ENCODE measurements at regions of chr7 and their contacts with region 1.

Region 1: GRCh38 chr7:77696198-77697028 is at the start of gene RSBN1L:
- DNase-seq: peak; percentile 99
- H3K4me3 ChIP-seq: peak within 1 kb of the TSS; percentile 99
- H3K4me3 Mint-ChIP-seq: peak within 1 kb of the TSS; percentile 100
- H3K27ac Mint-ChIP-seq: peak within 1 kb of the TSS; percentile 97
- H3K4me1 ChIP-seq: peaks cover 23% of the 10 kb centered on the region
- H3K4me1 Mint-ChIP-seq: peaks cover 30% of the 10 kb centered on the region
- H3K27me3 ChIP-seq: no peaks in the 10 kb centered on the region
- H3K27me3 Mint-ChIP-seq: no peaks in the 10 kb centered on the region
- CTCF ChIP-seq: peak in 1 of 2 experiments; percentile 10
- total RNA-seq, gene RSBN1L: 21.4 and 25.3 TPM in 2 replicates

Region 2: GRCh38 chr7:77657427-77658224 is 38.8 kb before region 1 on chr7:
- CTCF ChIA-PET with region 1: interaction called, 4 read pairs
- POLR2A ChIA-PET with region 1: interaction called, 3 read pairs
- intact Hi-C with region 1: loop called (anchors 2 kb)
- DNase-seq: peak in 1 of 2 experiments; percentile 59
- H3K4me3 ChIP-seq: no peak overlapping the region
- H3K4me3 Mint-ChIP-seq: no peak overlapping the region
- H3K27ac Mint-ChIP-seq: no peak overlapping the region
- H3K4me1 ChIP-seq: peaks cover 10% of the 10 kb centered on the region; the same call in 1 of the 2 replicates
- H3K4me1 Mint-ChIP-seq: peaks cover 18% of the 10 kb centered on the region
- H3K27me3 ChIP-seq: no peaks in the 10 kb centered on the region
- H3K27me3 Mint-ChIP-seq: no peaks in the 10 kb centered on the region
- CTCF ChIP-seq: peak; percentile 64 to 72

Region 3: GRCh38 chr7:77679615-77680014 is 16.8 kb before region 1 on chr7:
- CTCF ChIA-PET with region 1: no interaction called
- POLR2A ChIA-PET with region 1: interaction called, 7 read pairs
- intact Hi-C with region 1: loop called (anchors 2 kb)
- DNase-seq: peak in 1 of 2 experiments; percentile 48
- H3K4me3 ChIP-seq: no peak overlapping the region
- H3K4me3 Mint-ChIP-seq: peak overlapping the region; percentile 54
- H3K27ac Mint-ChIP-seq: peak overlapping the region; percentile 42
- H3K4me1 ChIP-seq: peaks cover 37% of the 10 kb centered on the region
- H3K4me1 Mint-ChIP-seq: peaks cover 21% of the 10 kb centered on the region
- H3K27me3 ChIP-seq: no peaks in the 10 kb centered on the region
- H3K27me3 Mint-ChIP-seq: no peaks in the 10 kb centered on the region
- CTCF ChIP-seq: no peak

Region 4: GRCh38 chr7:77729574-77730348 is 33.3 kb after region 1 on chr7:
- CTCF ChIA-PET with region 1: interaction called, 11 read pairs
- POLR2A ChIA-PET with region 1: no interaction called
- intact Hi-C with region 1: loop called (anchors 2 kb)
- DNase-seq: no peak
- H3K4me3 ChIP-seq: no peak overlapping the region
- H3K4me3 Mint-ChIP-seq: no peak overlapping the region
- H3K27ac Mint-ChIP-seq: no peak overlapping the region
- H3K4me1 ChIP-seq: peaks cover 11% of the 10 kb centered on the region
- H3K4me1 Mint-ChIP-seq: peaks cover 23% of the 10 kb centered on the region
- H3K27me3 ChIP-seq: no peaks in the 10 kb centered on the region
- H3K27me3 Mint-ChIP-seq: no peaks in the 10 kb centered on the region
- CTCF ChIP-seq: no peak

Region 5: DNA sequence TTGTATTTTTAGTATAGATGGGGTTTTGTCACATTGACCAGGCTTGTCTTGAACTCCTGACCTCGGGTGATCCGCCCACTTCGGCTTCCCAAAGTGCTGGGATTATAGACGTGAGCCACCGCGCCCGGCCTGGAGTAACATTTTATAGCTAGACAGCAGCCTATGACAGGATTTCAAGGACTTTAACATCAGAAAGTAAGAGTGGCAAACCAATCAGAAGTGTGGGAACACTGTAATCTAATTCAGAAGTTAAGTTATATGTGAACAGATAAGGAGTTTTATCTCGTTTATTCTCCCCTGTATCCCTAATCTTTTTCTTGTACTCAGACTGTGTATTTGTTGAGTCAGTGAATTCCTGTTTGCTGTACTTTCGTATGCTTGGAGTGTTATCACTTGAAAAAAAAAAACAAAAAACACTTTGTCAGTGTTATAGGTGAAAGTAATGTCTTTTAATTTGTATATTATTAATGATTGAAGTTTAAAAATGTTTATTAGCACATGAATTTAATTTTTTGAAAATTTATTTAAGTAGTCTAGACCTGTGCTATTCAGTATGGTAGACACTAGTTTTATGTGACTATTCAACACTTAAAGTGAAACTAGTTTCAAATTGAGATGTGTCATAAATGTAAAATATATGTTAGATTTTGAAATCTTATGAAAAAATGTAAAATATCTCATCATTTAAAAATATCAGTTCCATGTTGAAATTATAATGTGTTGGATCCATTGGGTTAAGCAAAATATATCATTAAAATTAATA is 38.4 kb after region 1 on chr7:
- CTCF ChIA-PET with region 1: interaction called, 11 read pairs
- POLR2A ChIA-PET with region 1: no interaction called
- intact Hi-C with region 1: loop called (anchors 2 kb)
- DNase-seq: peak in 1 of 2 experiments; percentile 49
- H3K4me3 ChIP-seq: no peak overlapping the region
- H3K4me3 Mint-ChIP-seq: peak overlapping the region; percentile 40
- H3K27ac Mint-ChIP-seq: no peak overlapping the region
- H3K4me1 ChIP-seq: peaks cover 36% of the 10 kb centered on the region
- H3K4me1 Mint-ChIP-seq: peaks cover 17% of the 10 kb centered on the region
- H3K27me3 ChIP-seq: no peaks in the 10 kb centered on the region
- H3K27me3 Mint-ChIP-seq: no peaks in the 10 kb centered on the region
- CTCF ChIP-seq: no peak

Region 6: GRCh38 chr7:77759294-77759889 is 63.0 kb after region 1 on chr7:
- CTCF ChIA-PET with region 1: no interaction called
- POLR2A ChIA-PET with region 1: no interaction called
- intact Hi-C with region 1: loop called (anchors 1 kb)
- DNase-seq: peak; percentile 52 to 79
- H3K4me3 ChIP-seq: no peak overlapping the region
- H3K4me3 Mint-ChIP-seq: no peak overlapping the region
- H3K27ac Mint-ChIP-seq: no peak overlapping the region
- H3K4me1 ChIP-seq: peaks cover 5% of the 10 kb centered on the region; the same call in 1 of the 2 replicates
- H3K4me1 Mint-ChIP-seq: peaks cover 6% of the 10 kb centered on the region
- H3K27me3 ChIP-seq: no peaks in the 10 kb centered on the region
- H3K27me3 Mint-ChIP-seq: no peaks in the 10 kb centered on the region
- CTCF ChIP-seq: peak; percentile 71 to 79

Measured in Caco-2 (cell line).